ENCODE measurements at regions of chr2 and their contacts with region 1.

Region 1: GRCh38 chr2:148020111-148021058 is at the start of gene ORC4:
- DNase-seq: peak; percentile 98 to 100
- H3K4me3 ChIP-seq: peak within 1 kb of the TSS; percentile 68 to 81
- H3K27ac ChIP-seq: peak within 1 kb of the TSS; percentile 92 to 96
- H3K4me1 ChIP-seq: peaks cover 0 to 43% (median 17%) of the 10 kb centered on the region in 4 donors
- H3K27me3 ChIP-seq: no peaks in the 10 kb centered on the region
- CTCF ChIP-seq: peak in 1 of 2 experiments; percentile 24

Region 2: DNA sequence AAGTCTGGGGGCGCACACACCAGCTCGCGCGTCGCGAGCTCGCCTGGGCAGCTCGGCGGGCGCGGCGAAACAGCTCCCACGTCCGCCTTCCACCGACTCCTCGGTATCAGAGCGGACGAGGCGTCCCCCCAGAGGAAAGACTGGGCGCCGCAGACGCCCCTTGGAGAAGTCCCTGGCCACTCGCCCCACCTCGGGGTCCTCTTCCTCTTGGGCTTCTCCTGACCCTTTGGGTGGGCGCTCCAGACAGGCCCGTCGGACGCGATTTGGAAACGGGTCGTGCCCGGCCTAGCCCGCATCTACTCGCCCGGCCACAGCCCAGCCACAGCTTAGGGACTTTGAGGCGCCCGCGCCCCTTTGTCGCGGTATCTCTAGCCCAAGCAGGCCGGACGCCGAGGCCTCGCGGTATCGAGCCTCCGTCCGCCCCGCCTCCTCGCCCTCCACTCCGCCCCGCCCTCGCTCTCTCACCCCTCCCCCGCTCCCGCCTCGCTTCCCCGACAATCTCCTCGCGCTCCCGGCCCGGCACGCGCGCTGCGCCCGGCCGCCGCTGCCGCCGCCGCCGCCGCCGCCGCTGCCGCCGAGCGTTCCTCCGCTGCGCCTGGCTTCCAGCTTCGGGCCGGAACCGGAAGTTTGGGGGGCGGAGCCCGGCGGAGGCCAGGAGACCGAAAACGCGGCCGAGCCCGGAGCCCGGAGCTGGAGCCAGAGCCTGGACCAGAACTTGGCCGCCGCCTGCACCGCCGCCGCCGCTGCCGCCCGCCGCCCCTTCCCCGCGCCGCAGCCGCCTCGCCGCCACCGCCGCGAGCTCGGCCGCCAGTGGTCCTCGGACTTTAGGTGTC is 176.3 kb before region 1 on chr2:
- intact Hi-C with region 1: loop called (anchors 5 kb)
- DNase-seq: peak; percentile 91 to 95
- H3K4me3 ChIP-seq: peak overlapping the region; percentile 67 to 82
- H3K27ac ChIP-seq: peak overlapping the region; percentile 93 to 96
- H3K4me1 ChIP-seq: peaks cover 0 to 30% (median 12%) of the 10 kb centered on the region in 4 donors
- H3K27me3 ChIP-seq: no peaks in the 10 kb centered on the region
- CTCF ChIP-seq: peak in 1 of 2 experiments; percentile 25

Region 3: DNA sequence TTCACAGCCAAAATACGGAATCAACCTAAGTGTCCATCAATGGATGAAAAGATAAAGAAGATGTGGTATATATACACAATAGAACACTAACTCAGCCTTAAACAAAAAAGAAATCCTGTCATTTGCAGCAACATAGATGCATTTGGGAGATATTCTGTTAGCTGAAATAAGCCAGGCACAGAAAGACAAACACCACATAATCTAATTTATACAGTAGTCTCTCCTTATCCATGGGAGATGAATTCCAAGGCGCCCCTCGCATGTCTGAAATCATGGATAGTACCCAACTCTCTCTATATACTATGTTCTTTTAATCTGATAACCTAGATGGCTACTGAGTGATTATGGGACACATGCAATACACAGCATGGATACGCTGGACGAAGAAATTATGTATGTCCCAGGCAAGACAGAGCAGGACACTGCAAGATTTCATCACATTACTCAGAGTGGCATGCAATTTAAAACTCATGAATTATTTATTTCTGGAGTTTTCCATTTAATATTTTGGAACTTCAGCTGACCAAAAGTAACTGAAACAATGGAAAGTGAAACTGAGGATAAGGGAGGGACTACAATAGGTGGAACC is 39.4 kb before region 1 on chr2:
- intact Hi-C with region 1: no loop called
- DNase-seq: no peak
- H3K4me3 ChIP-seq: no peak overlapping the region
- H3K27ac ChIP-seq: no peak overlapping the region
- H3K4me1 ChIP-seq: peaks cover 0 to 5% (median 0%) of the 10 kb centered on the region in 4 donors
- H3K27me3 ChIP-seq: no peaks in the 10 kb centered on the region
- CTCF ChIP-seq: no peak

Region 4: DNA sequence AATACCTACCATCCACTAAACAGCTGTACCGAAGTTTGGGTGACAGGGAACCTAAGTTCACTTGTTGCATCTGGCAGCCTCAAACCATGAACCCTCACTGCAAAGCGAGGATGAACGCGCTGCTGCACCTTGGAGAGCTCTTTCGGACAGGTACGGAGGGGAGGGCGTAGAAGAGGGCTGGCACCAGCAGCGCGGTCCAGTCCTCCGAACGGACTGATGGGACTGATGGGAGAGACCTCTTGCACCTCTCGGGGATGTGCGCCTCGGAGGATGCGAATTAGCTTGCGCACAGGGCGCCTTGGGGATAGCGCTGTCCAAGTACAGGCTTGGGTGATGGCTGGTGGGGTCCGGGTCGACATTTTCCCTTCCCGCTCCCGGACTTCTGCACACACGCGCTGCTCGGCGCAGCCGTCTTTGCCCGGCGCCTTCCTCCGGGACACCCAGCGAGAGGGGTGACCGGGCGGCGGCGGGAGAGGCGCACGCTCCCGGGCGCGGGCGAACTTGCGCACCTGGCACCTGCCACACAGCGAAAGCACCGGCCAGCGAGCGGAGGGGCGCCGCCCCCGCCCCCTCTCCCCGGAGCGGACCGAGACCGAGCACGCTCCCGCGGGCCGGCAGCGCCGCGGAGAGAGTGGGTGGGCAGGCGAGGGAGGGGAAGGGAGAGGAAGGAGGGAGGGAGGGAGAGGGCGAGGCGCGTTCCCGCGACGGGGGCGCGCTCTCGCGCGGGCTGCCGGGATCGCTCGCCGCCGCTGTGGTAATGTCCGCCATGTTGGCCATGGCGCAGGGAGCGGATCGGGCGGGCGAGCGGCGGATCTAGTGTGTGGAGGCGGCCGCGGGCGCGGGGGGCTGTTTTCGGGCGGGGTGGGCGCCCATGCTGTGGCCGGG is 623.9 kb after region 1 on chr2 and contains the start of gene EPC2:
- intact Hi-C with region 1: loop called (anchors 2 kb)
- DNase-seq: peak; percentile 80 to 92
- H3K4me3 ChIP-seq: peak within 1 kb of the TSS; percentile 86 to 89
- H3K27ac ChIP-seq: peak within 1 kb of the TSS; percentile 95 to 99
- H3K4me1 ChIP-seq: peaks cover 0 to 39% (median 13%) of the 10 kb centered on the region in 4 donors
- H3K27me3 ChIP-seq: no peaks in the 10 kb centered on the region
- CTCF ChIP-seq: no peak

Measured in tibial artery (tissue), 4 donors.